Astrocyte of the cerebellum (primary cell): ENCODE measurements at regions of chr5 and their contacts with region 1.

Region 1: DNA sequence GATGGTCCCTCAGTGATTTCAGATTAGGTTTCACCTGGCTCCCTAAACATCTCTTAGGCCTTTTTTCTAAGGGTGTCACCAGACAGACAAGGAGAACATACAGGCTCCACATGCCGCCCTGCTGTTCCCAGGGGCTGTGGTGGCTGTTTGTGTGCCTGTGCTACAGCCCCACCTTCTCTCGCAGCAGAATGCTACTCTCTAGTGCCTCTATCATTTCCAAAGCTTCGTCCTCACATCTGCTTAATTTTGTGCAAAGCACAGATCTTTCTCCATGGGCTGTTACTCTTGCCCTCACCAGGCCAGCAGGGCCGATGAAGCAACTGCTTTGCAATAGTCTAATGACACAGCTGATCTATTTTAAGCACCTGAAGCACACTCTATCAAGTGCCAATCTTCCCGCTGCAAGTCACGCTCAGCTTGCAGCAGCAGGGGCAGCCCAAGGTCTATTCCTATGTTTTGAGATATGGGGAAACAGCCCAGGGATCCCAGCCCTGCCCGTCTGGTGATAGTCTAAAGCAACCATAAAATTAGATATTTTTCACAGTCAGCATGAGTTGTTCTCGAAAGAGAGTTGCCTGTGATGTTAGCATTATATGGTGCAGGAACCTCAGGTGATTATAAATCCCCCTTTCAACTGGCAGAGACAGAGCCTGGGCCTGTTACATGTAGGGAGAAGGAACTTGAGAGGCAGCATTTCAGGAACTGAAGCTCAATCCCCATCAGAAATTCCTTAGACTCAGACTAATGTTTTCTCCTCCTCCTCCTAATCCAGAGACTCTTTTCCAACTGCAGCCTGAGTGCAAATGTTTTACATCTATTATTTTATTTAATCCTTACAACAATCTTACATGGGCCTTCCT is 12.7 kb downstream of the ABLIM3 start:
- DNase-seq: no peak
- H3K4me3 ChIP-seq: no peak overlapping the region
- CTCF ChIP-seq: no peak

Region 2: GRCh38 chr5:149228618-149229297 is 74.8 kb after region 1 on chr5:
- in situ Hi-C with region 1: no loop called
- DNase-seq: peak; percentile 75
- H3K4me3 ChIP-seq: no peak overlapping the region
- CTCF ChIP-seq: peak; percentile 82

Region 3: GRCh38 chr5:149240354-149240998 is 86.5 kb after region 1 on chr5:
- in situ Hi-C with region 1: loop called (anchors 5 kb)
- DNase-seq: no peak
- H3K4me3 ChIP-seq: no peak overlapping the region
- CTCF ChIP-seq: no peak